ENCODE measurements at regions of chr5 and their contacts with region 1.

Region 1: DNA sequence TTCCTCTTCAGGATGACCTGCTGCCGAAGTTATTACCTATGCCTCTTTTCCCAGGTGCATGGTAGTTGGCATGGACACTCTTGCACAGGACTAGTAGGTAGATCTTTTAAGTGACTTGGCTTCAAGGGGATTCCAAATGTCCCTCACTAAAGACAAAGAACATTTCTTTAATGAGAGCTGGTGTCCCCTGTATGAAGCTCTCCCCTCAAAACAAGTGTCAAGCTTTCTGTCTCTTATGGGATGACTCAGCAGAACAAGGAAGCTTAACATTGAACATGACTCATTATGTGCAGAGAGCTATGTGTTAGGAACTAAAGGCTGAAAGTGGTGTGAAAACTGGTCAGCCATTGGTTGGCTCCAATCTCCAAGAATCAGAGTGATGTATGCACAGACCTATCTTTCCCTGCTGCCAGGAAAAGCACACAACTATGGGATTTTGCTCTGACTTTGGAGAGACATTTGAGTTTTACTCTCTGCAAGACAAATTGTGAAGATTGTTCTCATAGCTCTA is 120.5 kb downstream of the PRDM6 start:
- DNase-seq: peak; percentile 93
- H3K4me3 Mint-ChIP-seq: no peak overlapping the region
- H3K27ac Mint-ChIP-seq: no peak overlapping the region
- H3K4me1 Mint-ChIP-seq: peaks cover 14% of the 10 kb centered on the region
- H3K27me3 Mint-ChIP-seq: no peaks in the 10 kb centered on the region
- CTCF ChIP-seq: no peak

Region 2: DNA sequence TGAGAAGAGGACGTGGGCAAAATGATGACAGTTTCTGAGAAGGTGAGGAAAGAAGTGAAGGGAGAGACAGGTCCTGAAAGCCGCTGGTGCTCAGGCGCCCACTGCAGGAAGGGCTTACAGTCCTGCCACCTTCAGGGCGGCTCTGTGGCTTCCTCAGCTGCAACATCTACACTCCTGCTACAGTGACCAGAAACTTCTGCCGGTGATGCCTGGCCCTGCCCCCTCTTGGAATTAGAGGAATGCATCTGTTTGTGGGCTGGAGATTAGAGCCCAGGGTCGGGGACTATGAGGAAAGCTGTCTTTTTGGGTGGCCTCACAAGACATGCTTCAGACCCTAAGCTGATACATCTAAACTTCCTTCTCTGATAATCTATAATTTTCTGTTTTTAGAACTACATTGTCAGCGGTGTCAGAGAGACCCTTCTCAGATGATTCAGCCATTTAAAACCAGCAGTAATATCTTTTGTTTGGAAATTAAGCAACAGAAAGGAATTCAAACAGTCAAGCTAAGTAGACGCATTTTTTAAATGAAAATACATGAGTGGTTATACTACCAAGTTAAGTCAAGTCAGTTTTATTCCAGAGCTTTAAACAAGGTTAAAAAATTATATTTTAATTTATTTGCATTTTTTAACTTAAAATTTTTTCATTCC is 90.1 kb before region 1 on chr5:
- CTCF ChIA-PET with region 1: no interaction called
- POLR2A ChIA-PET with region 1: no interaction called
- intact Hi-C with region 1: loop called (anchors 5 kb)
- DNase-seq: peak; percentile 61
- H3K4me3 Mint-ChIP-seq: peak overlapping the region; percentile 17
- H3K27ac Mint-ChIP-seq: peak overlapping the region; percentile 18
- H3K4me1 Mint-ChIP-seq: peaks cover 22% of the 10 kb centered on the region
- H3K27me3 Mint-ChIP-seq: no peaks in the 10 kb centered on the region
- CTCF ChIP-seq: no peak

Region 3: DNA sequence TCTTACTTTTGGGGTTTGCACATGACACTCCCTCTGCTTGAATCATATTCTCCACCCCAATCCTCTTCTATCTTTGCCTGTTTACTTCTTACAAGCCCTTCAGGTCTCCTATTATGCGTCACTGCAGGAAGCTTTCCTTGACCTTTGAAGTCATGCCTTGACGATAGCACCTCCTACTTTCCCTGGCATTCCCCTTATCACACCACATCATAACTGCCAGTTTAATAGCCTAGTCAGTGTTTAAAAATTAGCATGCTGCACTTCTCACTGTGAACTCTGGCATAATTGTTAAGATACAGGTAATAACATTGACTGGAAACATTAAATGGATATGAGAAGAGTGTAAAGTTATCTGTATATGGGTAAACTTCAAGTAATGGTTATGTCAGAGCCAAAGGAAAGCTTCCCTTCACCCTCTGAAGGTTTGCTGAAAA is 250.8 kb after region 1 on chr5:
- CTCF ChIA-PET with region 1: no interaction called
- POLR2A ChIA-PET with region 1: no interaction called
- intact Hi-C with region 1: no loop called
- DNase-seq: peak; percentile 57
- H3K4me3 Mint-ChIP-seq: no peak overlapping the region
- H3K27ac Mint-ChIP-seq: no peak overlapping the region
- H3K4me1 Mint-ChIP-seq: peaks cover 7% of the 10 kb centered on the region
- H3K27me3 Mint-ChIP-seq: no peaks in the 10 kb centered on the region
- CTCF ChIP-seq: no peak